Activated CD4-positive, alpha-beta memory T cell treated with anti-CD3 and anti-CD28 coated beads for 36 hours (primary cell): ENCODE measurements at regions of chr5 and their contacts with region 1.

Region 1: DNA sequence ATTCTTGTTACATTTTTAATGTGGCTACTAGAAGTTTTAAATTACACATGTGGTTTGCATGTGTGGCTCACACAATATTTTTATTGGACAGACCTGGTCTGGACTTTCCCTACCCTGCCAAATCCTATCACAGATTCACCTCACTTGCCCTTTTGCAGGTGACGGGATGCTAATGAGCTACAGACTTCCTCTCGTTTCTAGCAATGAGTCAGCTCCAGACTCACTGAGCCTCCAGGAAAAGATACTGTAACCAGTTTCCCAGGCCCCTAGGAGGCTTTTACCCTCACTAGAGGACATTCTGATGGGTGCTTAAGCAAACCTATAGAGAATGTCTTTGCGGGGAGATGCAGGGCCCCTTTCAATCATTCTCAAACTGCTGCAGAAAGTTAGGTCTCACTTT is 135.4 kb downstream of the WDR41 start:
- DNase-seq: peak; percentile 72
- H3K4me3 Mint-ChIP-seq: no peak overlapping the region
- H3K27ac Mint-ChIP-seq: no peak overlapping the region
- H3K4me1 Mint-ChIP-seq: peaks cover 17% of the 10 kb centered on the region
- H3K27me3 Mint-ChIP-seq: no peaks in the 10 kb centered on the region

Region 2: GRCh38 chr5:77155179-77155785 is 201.5 kb before region 1 on chr5:
- CTCF ChIA-PET with region 1: no interaction called
- POLR2A ChIA-PET with region 1: no interaction called
- intact Hi-C with region 1: loop called (anchors 10 kb)
- DNase-seq: peak; percentile 36
- H3K4me3 Mint-ChIP-seq: no peak overlapping the region
- H3K27ac Mint-ChIP-seq: no peak overlapping the region
- H3K4me1 Mint-ChIP-seq: peaks cover 24% of the 10 kb centered on the region
- H3K27me3 Mint-ChIP-seq: no peaks in the 10 kb centered on the region

Region 3: GRCh38 chr5:77328930-77329647 is 27.7 kb before region 1 on chr5:
- CTCF ChIA-PET with region 1: no interaction called
- POLR2A ChIA-PET with region 1: no interaction called
- intact Hi-C with region 1: loop called (anchors 2 kb)
- DNase-seq: no peak
- H3K4me3 Mint-ChIP-seq: no peak overlapping the region
- H3K27ac Mint-ChIP-seq: peak overlapping the region; percentile 28
- H3K4me1 Mint-ChIP-seq: peaks cover 19% of the 10 kb centered on the region
- H3K27me3 Mint-ChIP-seq: peaks cover 6% of the 10 kb centered on the region

Region 4: DNA sequence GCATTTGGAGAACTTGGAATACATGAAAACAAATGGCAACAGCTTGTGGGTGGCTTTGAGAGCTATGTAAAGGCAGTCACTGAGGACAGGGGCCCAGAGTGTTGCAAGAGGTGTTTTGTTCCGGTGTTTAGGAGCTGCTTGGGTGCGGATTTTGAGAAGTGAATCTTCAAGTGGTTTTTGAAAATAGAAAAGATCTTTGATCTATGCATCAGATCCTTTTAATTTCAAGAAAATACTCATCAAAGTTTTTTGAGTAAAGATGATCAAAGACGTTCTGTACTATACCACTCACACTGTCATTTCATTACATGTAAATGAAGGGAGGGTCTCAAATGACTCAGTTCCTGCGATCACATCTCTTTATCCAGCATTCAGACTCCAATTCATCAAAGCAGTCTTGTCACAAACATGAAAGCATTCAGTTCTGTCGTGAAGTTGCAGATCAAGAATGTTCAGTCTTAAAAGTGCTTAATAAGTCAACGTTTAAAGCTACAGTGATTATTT is 22.9 kb after region 1 on chr5:
- CTCF ChIA-PET with region 1: interaction called, 3 read pairs
- POLR2A ChIA-PET with region 1: interaction called, 5 read pairs
- intact Hi-C with region 1: loop called (anchors 1 kb)
- DNase-seq: peak; percentile 81
- H3K4me3 Mint-ChIP-seq: no peak overlapping the region
- H3K27ac Mint-ChIP-seq: peak overlapping the region; percentile 64
- H3K4me1 Mint-ChIP-seq: peaks cover 31% of the 10 kb centered on the region
- H3K27me3 Mint-ChIP-seq: peaks cover 3% of the 10 kb centered on the region